ENCODE measurements at regions of chr18 and their contacts with region 1.

Region 1: GRCh38 chr18:24262087-24262486 is 123.2 kb downstream of the CABYR start:
- DNase-seq: no peak
- H3K4me3 ChIP-seq: no peak overlapping the region
- H3K27ac ChIP-seq: no peak overlapping the region
- H3K4me1 ChIP-seq: no peaks in the 10 kb centered on the region
- H3K27me3 ChIP-seq: no peaks in the 10 kb centered on the region
- CTCF ChIP-seq: no peak
- POLR2A ChIP-seq: no peak

Region 2: DNA sequence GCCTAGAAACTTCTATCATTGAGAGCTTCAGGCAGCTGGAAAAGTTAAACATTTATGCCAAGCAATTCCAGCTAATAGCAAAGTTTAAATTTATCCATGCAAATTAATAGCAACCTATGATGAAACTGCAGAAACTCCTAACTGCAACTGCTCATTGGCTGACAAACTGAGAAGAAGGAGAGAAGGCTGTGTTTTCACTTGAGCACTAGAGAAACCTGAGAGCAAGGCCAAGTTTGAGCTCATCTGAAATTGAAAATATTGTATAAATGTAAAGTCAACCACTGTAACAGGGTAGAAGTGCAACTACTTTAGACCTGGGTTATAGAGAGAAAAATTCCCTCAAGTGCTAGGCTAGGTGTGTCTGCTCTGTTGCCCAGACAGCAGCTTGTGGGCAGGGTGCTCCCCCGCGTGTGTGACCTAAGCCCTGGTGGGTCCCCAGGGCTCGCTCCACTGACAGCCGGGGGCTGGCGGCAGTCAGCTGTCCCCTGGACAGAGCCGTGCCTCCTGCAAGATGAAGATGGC is 73.0 kb before region 1 on chr18:
- intact Hi-C with region 1: loop called (anchors 10 kb)
- DNase-seq: no peak
- H3K4me3 ChIP-seq: no peak overlapping the region
- H3K27ac ChIP-seq: no peak overlapping the region
- H3K4me1 ChIP-seq: no peaks in the 10 kb centered on the region
- H3K27me3 ChIP-seq: no peaks in the 10 kb centered on the region
- CTCF ChIP-seq: no peak
- POLR2A ChIP-seq: no peak

Measured in thyroid gland (tissue), 4 donors.